IMR-90 (cell line): ENCODE measurements at regions of chr2 and their contacts with region 1.

Region 1: DNA sequence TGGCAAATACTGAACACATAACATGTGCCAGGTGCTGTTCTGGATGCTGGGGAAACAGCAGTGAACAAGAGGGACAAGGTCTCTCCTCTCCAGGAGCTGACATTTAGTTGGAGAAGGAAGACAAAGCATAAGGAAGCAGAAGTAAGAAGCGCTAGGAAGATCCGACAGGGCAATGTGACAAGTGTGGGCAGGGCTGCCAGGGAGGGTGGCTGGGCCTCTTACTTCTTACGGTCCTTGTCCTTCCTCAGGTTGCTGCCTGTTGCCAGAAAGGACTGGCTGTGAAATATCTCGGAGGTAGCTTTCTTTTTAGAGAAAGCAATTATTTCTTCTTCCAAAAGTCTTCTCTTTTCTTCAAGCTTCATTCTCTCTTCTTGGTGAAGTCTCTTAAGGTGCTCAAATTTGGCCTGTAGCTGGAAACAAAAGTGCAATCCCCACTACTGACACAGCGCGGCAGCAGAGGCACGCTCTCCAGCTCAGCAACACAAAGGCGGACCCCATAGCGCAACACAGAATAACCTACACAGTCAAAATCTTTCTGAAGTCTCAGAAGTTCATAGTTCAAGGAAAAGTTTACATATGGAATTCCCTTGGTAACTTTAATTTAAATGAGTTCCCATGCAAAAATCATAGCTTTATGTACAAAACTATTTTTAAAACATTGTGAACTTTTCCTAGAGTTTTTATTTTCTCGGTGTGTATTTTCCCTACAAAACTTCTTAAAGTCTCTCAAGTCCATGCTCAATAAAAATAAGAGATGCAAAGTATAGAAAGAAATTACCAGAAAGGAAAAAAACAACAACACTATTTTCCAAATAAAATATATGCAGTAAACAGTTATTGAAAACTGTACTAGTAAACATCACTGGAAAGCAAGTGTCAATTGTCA is 67.7 kb downstream of the SEPTIN10 start:
- DNase-seq: peak; percentile 60
- ATAC-seq: peak; percentile 98
- H3K4me3 ChIP-seq: no peak overlapping the region
- H3K27ac ChIP-seq: no peak overlapping the region
- H3K4me1 ChIP-seq: peaks cover 2% of the 10 kb centered on the region
- H3K27me3 ChIP-seq: no peaks in the 10 kb centered on the region
- CTCF ChIP-seq: peak; percentile 92
- POLR2A ChIP-seq: 0 out of 2 replicates have a peak, but pooled peaks have one; percentile 47
- RAD21 ChIP-seq: peak; percentile 94

Region 2: GRCh38 chr2:108315444-108315934 is 1230.6 kb before region 1 on chr2:
- CTCF ChIA-PET with region 1: no interaction called
- POLR2A ChIA-PET with region 1: no interaction called
- dilution Hi-C with region 1: no loop called
- in situ Hi-C with region 1: no loop called
- intact Hi-C with region 1: no loop called
- DNase-seq: no peak
- ATAC-seq: no peak
- H3K4me3 ChIP-seq: no peak overlapping the region
- H3K27ac ChIP-seq: no peak overlapping the region
- H3K4me1 ChIP-seq: no peaks in the 10 kb centered on the region
- H3K27me3 ChIP-seq: no peaks in the 10 kb centered on the region; the same call in 1 of the 2 replicates
- CTCF ChIP-seq: no peak
- POLR2A ChIP-seq: no peak
- RAD21 ChIP-seq: no peak

Region 3: DNA sequence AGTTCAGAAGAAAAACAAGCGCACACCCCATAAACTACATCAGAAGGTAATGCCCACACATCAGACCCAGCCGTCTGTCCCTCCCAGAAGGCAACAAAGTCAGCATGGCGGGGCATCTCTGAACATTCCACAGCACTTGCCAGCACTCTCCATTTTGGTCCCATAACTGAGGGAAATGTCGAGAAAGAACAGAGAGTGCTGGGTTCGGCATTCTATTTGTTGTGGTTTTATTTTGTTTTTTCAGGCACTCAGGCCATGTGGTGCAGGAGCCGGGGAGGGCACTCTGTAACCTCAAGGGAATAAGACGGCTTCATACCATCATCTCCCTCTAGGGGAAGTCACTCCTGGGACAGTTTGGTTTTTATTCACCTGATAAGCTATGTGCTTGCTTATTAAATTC is 88.3 kb before region 1 on chr2:
- CTCF ChIA-PET with region 1: no interaction called
- POLR2A ChIA-PET with region 1: no interaction called
- dilution Hi-C with region 1: no loop called
- in situ Hi-C with region 1: no loop called
- intact Hi-C with region 1: no loop called
- DNase-seq: no peak
- ATAC-seq: no peak
- H3K4me3 ChIP-seq: no peak overlapping the region
- H3K27ac ChIP-seq: no peak overlapping the region
- H3K4me1 ChIP-seq: no peaks in the 10 kb centered on the region
- H3K27me3 ChIP-seq: no peaks in the 10 kb centered on the region
- CTCF ChIP-seq: 0 out of 2 replicates have a peak, but pooled peaks have one; percentile 6
- POLR2A ChIP-seq: no peak
- RAD21 ChIP-seq: no peak

Region 4: DNA sequence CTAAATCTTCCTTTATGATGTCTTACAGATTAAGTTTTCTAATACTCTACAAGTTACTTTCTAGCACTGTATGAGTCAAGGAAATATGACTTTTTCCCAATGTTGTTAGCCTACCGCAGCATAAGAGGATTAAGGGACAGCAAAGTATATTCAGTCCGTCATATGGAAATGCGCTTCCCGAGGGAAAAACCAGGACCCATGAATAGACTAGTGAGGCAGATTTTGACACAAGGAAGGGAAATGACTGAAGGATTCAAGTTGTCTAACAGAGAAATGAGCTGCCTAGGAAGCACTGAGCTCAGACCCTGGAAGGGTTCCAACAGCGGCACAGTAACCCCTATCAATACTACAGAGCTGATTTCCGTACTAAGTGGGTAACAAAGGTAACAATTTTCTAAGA is 55.7 kb after region 1 on chr2:
- CTCF ChIA-PET with region 1: no interaction called
- POLR2A ChIA-PET with region 1: no interaction called
- dilution Hi-C with region 1: no loop called
- in situ Hi-C with region 1: no loop called
- intact Hi-C with region 1: no loop called
- DNase-seq: no peak
- ATAC-seq: no peak
- H3K4me3 ChIP-seq: no peak overlapping the region
- H3K27ac ChIP-seq: no peak overlapping the region
- H3K4me1 ChIP-seq: peaks cover 11% of the 10 kb centered on the region
- H3K27me3 ChIP-seq: no peaks in the 10 kb centered on the region
- CTCF ChIP-seq: no peak
- POLR2A ChIP-seq: no peak
- RAD21 ChIP-seq: no peak

Region 5: GRCh38 chr2:109689182-109689930 is 143.3 kb after region 1 on chr2:
- CTCF ChIA-PET with region 1: no interaction called
- POLR2A ChIA-PET with region 1: no interaction called
- dilution Hi-C with region 1: no loop called
- in situ Hi-C with region 1: no loop called
- intact Hi-C with region 1: no loop called
- DNase-seq: no peak
- ATAC-seq: no peak
- H3K4me3 ChIP-seq: no peak overlapping the region
- H3K27ac ChIP-seq: no peak overlapping the region
- H3K4me1 ChIP-seq: peaks cover 4% of the 10 kb centered on the region; the same call in 1 of the 2 replicates
- H3K27me3 ChIP-seq: peaks cover 5% of the 10 kb centered on the region
- CTCF ChIP-seq: no peak
- POLR2A ChIP-seq: no peak
- RAD21 ChIP-seq: no peak

Region 6: GRCh38 chr2:109715313-109715805 is 169.3 kb after region 1 on chr2:
- CTCF ChIA-PET with region 1: interaction called, 14 read pairs
- POLR2A ChIA-PET with region 1: no interaction called
- dilution Hi-C with region 1: no loop called
- in situ Hi-C with region 1: no loop called
- intact Hi-C with region 1: no loop called
- DNase-seq: no peak
- ATAC-seq: no peak
- H3K4me3 ChIP-seq: no peak overlapping the region
- H3K27ac ChIP-seq: no peak overlapping the region
- H3K4me1 ChIP-seq: no peaks in the 10 kb centered on the region
- H3K27me3 ChIP-seq: peaks cover 27% of the 10 kb centered on the region
- CTCF ChIP-seq: peak; percentile 13; the same call in 1 of the 2 replicates
- POLR2A ChIP-seq: no peak
- RAD21 ChIP-seq: no peak

Region 7: DNA sequence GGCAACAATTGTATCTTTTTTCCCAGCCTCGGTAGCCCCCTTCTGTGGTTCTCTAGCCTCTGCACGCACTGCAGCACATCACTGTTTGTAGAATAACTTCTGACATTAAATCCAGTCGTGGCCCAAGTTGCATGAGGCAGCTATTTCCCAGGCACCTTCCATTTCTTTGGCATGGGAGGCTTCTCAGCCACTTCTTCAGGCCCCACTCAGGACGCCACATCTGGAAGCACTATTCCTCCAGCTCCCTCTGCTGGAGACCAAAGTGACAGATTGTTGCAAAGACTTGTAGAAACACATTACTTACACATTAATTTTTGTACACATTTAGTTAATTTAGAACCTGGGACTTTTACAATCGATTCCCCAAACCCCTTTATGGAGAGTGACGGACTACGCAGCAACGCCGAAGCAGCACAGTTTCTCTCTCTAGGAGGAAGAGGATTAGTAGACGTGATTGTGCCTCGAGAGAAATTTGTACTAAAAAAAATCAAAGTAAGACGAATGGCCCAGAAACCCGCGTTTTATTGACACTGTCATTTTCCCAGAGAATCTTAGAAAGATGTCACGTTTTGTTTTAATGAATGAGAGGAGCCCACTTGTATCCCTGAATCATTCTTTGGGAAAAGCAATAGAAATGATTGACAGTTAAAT is 190.2 kb after region 1 on chr2:
- CTCF ChIA-PET with region 1: interaction called, 18 read pairs
- POLR2A ChIA-PET with region 1: no interaction called
- dilution Hi-C with region 1: no loop called
- in situ Hi-C with region 1: no loop called
- intact Hi-C with region 1: loop called (anchors 1 kb)
- DNase-seq: peak; percentile 65
- ATAC-seq: peak; percentile 79
- H3K4me3 ChIP-seq: no peak overlapping the region
- H3K27ac ChIP-seq: no peak overlapping the region
- H3K4me1 ChIP-seq: no peaks in the 10 kb centered on the region
- H3K27me3 ChIP-seq: peaks cover 6% of the 10 kb centered on the region
- CTCF ChIP-seq: peak; percentile 72
- POLR2A ChIP-seq: no peak
- RAD21 ChIP-seq: peak; percentile 82